ENCODE measurements at regions of chr1 and their contacts with region 1.

Region 1: DNA sequence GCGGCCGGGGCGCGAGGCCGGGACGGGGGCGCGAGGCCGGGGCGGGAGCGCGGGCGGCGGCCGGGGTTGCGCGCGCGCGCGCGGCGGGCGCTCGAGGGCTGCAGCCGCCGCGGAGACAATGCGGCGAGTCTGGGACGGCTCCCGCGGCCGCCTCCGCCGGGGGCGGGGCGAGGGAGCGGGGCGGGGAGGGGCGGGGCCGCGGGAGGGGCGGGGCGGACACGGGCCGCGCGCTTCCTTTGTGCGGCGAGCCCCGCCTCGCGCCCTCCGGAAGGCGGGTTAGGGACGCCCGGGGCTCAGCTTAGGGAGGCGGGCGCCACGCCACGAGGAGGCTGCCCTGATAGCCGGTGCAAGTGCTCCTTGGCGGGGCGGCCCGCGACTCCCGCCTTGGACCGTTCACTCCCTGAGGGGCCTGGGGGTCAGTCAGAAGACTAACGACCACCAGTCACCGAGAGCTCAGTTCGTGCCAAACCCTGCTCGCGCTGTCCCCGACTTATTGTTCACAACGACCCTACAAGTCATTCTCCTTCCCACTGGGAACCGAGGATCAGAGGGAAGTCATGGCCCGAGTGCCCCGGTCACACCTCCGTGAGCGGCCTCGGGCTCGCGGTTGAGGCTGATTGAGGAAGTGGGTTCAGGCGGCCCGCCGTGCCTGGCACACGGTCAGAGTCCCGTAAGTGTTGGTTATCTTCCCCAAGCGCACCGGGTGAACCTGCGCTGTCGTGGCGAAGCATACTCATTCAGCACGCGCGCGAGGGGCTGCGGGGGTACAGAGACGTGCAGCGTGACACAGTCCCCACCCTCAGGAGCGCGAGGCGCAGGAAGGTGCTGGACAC is 29.1 kb upstream of the A3GALT2 start:
- DNase-seq: peak; percentile 69 to 81
- H3K4me3 ChIP-seq: peak overlapping the region; percentile 79
- H3K27ac ChIP-seq: peak overlapping the region; percentile 67
- H3K4me1 ChIP-seq: peaks cover 53% of the 10 kb centered on the region
- H3K27me3 ChIP-seq: no peaks in the 10 kb centered on the region
- CTCF ChIP-seq: no peak

Region 2: DNA sequence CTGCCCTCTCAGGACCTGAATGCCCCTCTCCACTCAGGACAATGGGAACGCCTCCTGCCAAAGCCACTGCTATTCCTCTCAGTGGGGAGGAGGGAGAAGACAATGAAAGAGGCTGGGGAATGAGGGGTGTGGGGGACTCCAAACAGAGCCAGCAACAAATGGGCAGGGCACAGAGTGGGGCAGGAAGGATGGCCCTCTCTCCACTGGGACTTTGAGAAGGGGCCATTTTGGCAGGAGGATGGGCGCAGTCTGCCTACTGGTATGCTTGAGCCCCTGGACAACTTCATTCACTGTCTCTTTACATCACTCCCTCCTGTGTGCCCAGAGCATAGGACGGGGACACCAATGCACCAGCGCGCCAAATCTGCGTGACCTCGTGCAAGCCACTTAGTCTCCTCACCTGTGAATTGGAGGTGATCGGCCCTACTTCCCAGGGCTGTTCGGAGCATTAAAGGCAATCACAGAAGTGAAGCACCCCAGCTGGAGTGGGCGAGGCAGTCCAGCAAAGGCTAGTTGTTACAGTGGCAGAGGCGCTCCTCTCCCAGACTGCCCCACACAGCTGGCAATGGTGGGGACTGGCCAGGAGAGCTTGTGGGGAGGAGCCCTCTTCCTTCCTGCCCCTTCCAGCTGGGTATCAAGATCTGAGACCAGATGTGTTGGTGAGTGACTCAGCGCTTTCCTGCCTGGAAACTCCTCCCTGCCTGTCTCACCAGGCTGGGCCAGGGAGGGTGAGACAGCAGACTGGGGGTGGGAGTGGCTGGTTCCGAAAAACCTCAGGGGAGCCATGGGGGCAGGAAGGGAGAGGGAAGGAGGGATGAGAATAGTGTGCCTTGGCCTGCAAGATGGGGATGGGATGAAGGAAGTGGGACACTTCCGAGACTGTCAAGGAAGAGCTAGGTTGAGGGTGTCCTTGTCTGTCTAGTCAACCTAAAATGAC is 625.0 kb before region 1 on chr1:
- CTCF ChIA-PET with region 1: no interaction called
- POLR2A ChIA-PET with region 1: no interaction called
- intact Hi-C with region 1: no loop called
- DNase-seq: peak; percentile 69 to 83
- H3K4me3 ChIP-seq: no peak overlapping the region
- H3K27ac ChIP-seq: peak overlapping the region; percentile 50
- H3K4me1 ChIP-seq: peaks cover 15% of the 10 kb centered on the region
- H3K27me3 ChIP-seq: no peaks in the 10 kb centered on the region
- CTCF ChIP-seq: no peak

Region 3: GRCh38 chr1:32798679-32799416 is 551.1 kb before region 1 on chr1:
- CTCF ChIA-PET with region 1: no interaction called
- POLR2A ChIA-PET with region 1: interaction called, 20 read pairs
- intact Hi-C with region 1: no loop called
- DNase-seq: no peak
- H3K4me3 ChIP-seq: 0 out of 2 replicates have a peak overlapping the region, but pooled peaks have one; percentile 17
- H3K27ac ChIP-seq: peak overlapping the region; percentile 85
- H3K4me1 ChIP-seq: peaks cover 65% of the 10 kb centered on the region
- H3K27me3 ChIP-seq: no peaks in the 10 kb centered on the region
- CTCF ChIP-seq: no peak

Region 4: GRCh38 chr1:33472349-33472980 is 122.5 kb after region 1 on chr1 and contains the start of gene ZSCAN20:
- CTCF ChIA-PET with region 1: no interaction called
- POLR2A ChIA-PET with region 1: no interaction called
- intact Hi-C with region 1: loop called (anchors 5 kb)
- DNase-seq: peak; percentile 92 to 96
- H3K4me3 ChIP-seq: peak within 1 kb of the TSS; percentile 66
- H3K27ac ChIP-seq: no peak within 1 kb of the TSS
- H3K4me1 ChIP-seq: peaks cover 10% of the 10 kb centered on the region
- H3K27me3 ChIP-seq: no peaks in the 10 kb centered on the region
- CTCF ChIP-seq: no peak
- total RNA-seq, gene ZSCAN20: 6.0 and 6.4 TPM in 2 replicates

Region 5: DNA sequence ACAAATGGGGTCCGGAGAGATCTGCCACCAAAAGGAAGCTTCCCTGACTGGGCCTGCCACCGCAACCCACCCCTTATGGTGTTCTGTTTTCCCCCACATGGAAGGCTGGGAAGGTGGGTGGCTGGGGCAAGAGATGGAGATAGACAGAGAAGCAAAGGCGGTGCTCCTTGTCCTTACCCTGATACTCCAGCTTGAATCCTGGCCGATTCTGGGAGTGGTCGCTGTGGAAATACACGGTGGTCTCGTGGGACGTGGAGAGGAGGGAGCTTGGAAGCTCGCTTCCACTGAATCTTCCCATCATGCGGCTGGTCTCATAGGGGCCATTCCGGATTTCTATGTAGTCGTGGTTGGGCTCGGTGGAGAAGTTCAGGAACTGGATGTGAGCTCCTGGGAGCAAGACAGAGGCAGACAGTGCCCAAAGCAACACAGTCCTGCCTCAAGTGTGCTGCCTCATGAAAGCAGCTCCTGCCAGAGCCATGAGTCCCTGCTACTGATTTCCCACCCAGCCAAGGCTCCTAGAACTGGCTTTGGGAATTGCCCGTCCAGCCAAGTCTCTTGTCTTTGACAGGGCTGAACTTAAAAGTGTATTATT is 261.0 kb after region 1 on chr1:
- CTCF ChIA-PET with region 1: interaction called, 13 read pairs
- POLR2A ChIA-PET with region 1: no interaction called
- intact Hi-C with region 1: no loop called
- DNase-seq: no peak
- H3K4me3 ChIP-seq: no peak overlapping the region
- H3K27ac ChIP-seq: no peak overlapping the region
- H3K4me1 ChIP-seq: no peaks in the 10 kb centered on the region
- H3K27me3 ChIP-seq: peaks cover 82% of the 10 kb centered on the region
- CTCF ChIP-seq: no peak